Mammary epithelial cell (primary cell): ENCODE measurements at regions of chr10 and their contacts with region 1.

Region 1: DNA sequence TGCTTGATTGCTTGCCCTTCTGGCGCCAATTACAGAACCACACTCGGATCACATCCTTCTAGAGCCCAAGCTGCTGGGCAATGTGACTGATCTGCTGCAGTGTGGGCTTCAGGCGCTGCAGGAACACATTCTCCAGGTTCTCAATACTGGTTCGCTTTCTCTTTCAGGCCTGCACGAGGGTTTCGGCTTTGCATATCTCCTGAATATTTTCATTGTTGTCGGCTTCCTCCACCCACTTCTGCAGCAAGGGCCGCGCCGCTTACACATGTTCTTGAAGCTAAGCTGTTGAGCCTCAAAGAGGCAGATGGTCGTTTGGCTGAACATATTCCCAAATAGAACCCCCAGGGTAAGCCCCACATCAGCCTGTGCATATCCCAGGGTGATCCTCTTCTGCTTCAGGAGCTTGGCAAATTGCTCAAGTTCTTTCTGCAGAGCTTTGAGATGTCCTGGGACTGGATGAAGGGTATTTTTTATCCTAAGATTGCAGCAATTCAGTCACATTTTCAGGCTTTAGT is 64.6 kb downstream of the HERC4 start:
- DNase-seq: no peak
- H3K4me3 ChIP-seq: no peak overlapping the region
- H3K27ac ChIP-seq: no peak overlapping the region
- H3K4me1 ChIP-seq: no peaks in the 10 kb centered on the region
- H3K27me3 ChIP-seq: no peaks in the 10 kb centered on the region
- CTCF ChIP-seq: no peak

Region 2: GRCh38 chr10:67914777-67915340 is 95.6 kb before region 1 on chr10:
- CTCF ChIA-PET with region 1: no interaction called
- dilution Hi-C with region 1: loop called (anchors 5 kb)
- in situ Hi-C with region 1: no loop called
- intact Hi-C with region 1: no loop called
- DNase-seq: no peak
- H3K4me3 ChIP-seq: no peak overlapping the region
- H3K27ac ChIP-seq: no peak overlapping the region
- H3K4me1 ChIP-seq: no peaks in the 10 kb centered on the region
- H3K27me3 ChIP-seq: no peaks in the 10 kb centered on the region
- CTCF ChIP-seq: no peak

Region 3: GRCh38 chr10:68043030-68043429 is 32.5 kb after region 1 on chr10:
- CTCF ChIA-PET with region 1: no interaction called
- dilution Hi-C with region 1: loop called (anchors 5 kb)
- in situ Hi-C with region 1: no loop called
- intact Hi-C with region 1: no loop called
- DNase-seq: peak; percentile 11
- H3K4me3 ChIP-seq: no peak overlapping the region
- H3K27ac ChIP-seq: no peak overlapping the region
- H3K4me1 ChIP-seq: no peaks in the 10 kb centered on the region
- H3K27me3 ChIP-seq: no peaks in the 10 kb centered on the region
- CTCF ChIP-seq: no peak